Calu3 (cell line): ENCODE measurements at regions of chr7 and their contacts with region 1.

Region 1: DNA sequence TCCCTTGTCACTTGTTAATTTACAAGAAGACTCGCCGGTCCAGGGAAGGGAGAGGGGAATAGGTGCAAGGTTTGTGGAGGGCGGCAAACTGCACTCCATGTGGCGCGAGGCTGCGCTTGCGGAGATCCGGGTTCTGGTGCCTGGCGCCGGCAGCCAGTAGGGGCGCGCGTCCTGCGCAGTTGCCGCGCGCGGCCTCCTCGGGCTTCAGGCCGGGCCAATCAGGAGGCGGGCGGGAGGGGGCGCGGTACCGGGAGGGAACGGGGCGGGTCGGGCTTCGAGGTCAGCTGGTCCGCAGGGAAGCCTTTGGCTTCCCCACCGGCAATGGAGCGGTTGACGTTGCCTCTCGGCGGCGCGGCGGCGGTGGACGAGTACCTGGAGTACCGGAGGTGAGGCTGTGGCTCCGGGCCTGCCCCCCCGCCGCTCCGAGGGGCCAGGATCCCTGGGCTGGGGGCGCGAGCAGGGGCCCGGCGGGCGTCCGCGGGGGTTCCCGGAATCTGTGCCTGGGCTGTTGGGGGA is at the start of gene FAM221A:
- DNase-seq: peak; percentile 95
- H3K4me3 Mint-ChIP-seq: peak within 1 kb of the TSS; percentile 94
- H3K27ac Mint-ChIP-seq: peak within 1 kb of the TSS; percentile 75
- H3K4me1 Mint-ChIP-seq: peaks cover 29% of the 10 kb centered on the region
- H3K27me3 Mint-ChIP-seq: no peaks in the 10 kb centered on the region
- CTCF ChIP-seq: peak; percentile 95
- total RNA-seq, gene FAM221A: 25.2 and 30.8 TPM in 2 replicates

Region 2: GRCh38 chr7:23597094-23598091 is 82.6 kb before region 1 on chr7 and contains the start of gene CCDC126:
- CTCF ChIA-PET with region 1: interaction called, 3 read pairs
- intact Hi-C with region 1: loop called (anchors 5 kb)
- DNase-seq: peak; percentile 98
- H3K4me3 Mint-ChIP-seq: peak within 1 kb of the TSS; percentile 87
- H3K27ac Mint-ChIP-seq: peak within 1 kb of the TSS; percentile 68
- H3K4me1 Mint-ChIP-seq: peaks cover 30% of the 10 kb centered on the region
- H3K27me3 Mint-ChIP-seq: no peaks in the 10 kb centered on the region
- CTCF ChIP-seq: no peak
- total RNA-seq, gene CCDC126: 11.0 and 12.3 TPM in 2 replicates